ENCODE measurements at regions of chr20 and their contacts with region 1.

Region 1: DNA sequence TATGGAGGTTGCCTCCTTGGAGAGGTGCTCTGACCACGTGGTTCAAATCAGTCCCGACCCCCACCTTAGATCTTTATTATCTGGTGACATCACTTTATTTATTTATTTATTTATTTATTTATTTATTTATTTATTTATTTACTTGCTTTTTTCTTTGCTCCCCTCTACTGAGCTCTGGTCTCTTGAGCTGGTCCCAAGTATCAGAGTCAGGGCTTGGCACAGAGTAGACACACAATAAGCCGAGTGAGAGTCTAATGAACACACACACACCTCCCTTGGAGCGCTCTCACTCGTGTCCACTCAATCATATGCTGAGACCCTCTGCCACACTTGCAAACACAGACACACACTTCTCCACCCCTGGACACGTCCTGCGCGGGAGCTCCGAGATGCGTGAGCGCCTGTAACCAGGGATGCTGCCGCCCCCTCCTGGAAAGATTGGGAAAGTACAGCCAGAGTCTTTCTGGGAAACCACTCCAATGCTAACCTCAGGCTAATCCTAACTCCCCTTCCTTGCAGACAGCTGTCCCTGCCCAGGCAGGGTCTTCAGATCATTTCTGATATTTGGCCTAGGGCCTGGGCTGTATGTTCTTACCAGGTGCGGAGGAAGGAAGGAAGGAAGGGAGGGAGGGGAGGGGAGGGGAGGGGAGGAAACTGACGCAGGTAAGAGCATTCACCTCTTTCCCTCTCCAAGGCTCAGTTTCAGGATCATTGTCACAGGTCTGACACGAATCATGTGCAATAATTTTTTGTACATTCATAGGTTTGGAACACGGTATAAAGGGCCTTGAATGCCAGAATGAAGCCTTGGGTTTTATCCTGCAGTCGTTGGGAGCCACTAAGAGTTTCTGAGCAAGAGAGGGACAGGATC is 70.9 kb downstream of the STK35 start:
- DNase-seq: peak; percentile 79
- H3K4me3 ChIP-seq: peak overlapping the region; percentile 50; the same call in 1 of the 2 replicates
- H3K27ac ChIP-seq: no peak overlapping the region
- H3K4me1 ChIP-seq: no peaks in the 10 kb centered on the region
- H3K27me3 ChIP-seq: peaks cover 22% of the 10 kb centered on the region

Region 2: GRCh38 chr20:1945134-1945618 is 227.4 kb before region 1 on chr20:
- in situ Hi-C with region 1: no loop called
- DNase-seq: peak; percentile 89
- H3K4me3 ChIP-seq: no peak overlapping the region
- H3K27ac ChIP-seq: peak overlapping the region; percentile 79
- H3K4me1 ChIP-seq: peaks cover 38% of the 10 kb centered on the region
- H3K27me3 ChIP-seq: no peaks in the 10 kb centered on the region

Region 3: GRCh38 chr20:1979106-1979779 is 193.3 kb before region 1 on chr20:
- in situ Hi-C with region 1: loop called (anchors 10 kb)
- DNase-seq: peak; percentile 22
- H3K4me3 ChIP-seq: no peak overlapping the region
- H3K27ac ChIP-seq: no peak overlapping the region
- H3K4me1 ChIP-seq: no peaks in the 10 kb centered on the region
- H3K27me3 ChIP-seq: peaks cover 79% of the 10 kb centered on the region

Region 4: DNA sequence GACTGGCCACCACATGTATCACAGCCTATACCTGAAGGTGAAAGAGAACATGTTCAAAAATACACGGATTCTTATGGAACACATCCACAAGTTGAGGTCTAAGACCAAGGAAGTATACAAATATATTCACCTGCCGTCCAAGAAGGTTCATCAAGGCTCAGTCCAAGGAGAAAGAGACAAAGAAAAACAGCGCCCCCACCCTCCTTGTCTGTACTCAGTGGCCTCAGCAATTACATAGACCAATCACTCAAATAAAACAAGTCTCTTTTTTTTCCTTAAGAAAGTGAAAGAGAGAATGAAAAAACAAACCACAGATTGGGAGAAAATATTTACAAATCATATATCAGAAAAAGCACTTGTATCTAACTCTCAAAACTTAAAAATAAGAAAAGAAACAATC is 608.4 kb after region 1 on chr20:
- in situ Hi-C with region 1: no loop called
- DNase-seq: no peak
- H3K4me3 ChIP-seq: no peak overlapping the region
- H3K27ac ChIP-seq: no peak overlapping the region
- H3K4me1 ChIP-seq: no peaks in the 10 kb centered on the region
- H3K27me3 ChIP-seq: peaks cover 47% of the 10 kb centered on the region

Measured in GM23248 (cell line).